ENCODE measurements at regions of chr13 and their contacts with region 1.

Region 1: DNA sequence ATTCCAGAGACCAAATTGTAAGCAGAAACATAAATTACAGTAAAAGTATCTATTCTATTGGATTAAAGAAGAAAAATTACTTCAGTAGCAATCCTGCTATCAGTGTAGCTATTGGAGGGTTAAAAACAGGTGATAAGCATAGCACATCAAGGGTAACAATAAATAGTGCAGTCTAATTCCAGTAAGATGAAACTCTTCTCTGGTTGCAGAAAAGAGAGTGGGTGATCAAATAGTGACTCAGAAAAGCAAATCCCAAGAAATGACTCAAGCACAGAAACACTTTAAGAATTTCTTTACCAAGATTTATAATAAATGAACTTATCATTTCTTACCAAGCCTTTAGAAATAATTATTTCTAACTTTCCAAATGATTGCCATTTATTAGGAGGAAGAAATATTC is 135.7 kb downstream of the LMO7 start:
- DNase-seq: peak; percentile 83
- H3K4me3 ChIP-seq: no peak overlapping the region
- H3K27ac ChIP-seq: peak overlapping the region; percentile 83
- H3K4me1 ChIP-seq: peaks cover 12% of the 10 kb centered on the region
- H3K27me3 ChIP-seq: no peaks in the 10 kb centered on the region
- CTCF ChIP-seq: no peak

Region 2: DNA sequence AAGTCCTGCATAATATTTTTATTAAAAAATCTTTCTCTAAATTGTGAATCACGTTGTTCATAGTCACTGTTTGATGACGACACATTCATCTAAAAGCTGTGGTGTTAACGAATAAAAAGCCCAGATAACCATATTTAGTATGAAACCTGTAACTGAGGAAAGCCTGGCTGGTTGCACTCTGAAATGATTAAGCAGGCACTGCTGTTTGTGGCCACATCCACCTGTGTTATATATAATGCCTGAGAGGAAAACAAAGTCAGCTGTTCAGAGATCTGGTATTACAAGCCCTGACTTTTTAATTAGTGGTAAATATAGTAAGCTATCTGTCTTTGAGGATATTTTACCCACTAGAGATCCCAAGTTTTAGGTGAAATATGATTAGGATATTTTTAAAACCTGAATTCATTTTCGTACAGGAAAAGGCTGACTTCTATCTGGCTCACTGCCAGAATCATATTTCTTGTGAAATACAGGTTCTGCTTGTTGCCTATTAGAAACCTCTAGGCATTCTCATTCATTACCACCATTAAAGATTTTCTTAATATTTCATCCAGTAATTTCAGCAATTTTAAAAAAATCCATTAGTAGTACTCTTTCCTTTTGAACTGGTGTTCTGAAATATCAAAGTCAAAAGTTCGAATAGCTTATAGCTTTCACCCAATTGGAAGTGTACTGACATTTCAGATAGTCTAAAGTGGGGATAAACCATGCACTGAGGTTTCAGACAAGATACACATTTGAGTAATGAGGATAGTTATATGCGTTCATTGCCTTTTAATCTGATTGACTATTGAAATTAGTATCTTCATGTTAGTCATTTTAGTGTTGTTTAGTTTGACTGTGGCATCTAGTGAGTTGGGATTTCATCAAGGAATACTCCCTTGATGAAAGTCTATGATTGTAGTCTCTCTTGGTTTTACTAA is 56.0 kb before region 1 on chr13:
- CTCF ChIA-PET with region 1: no interaction called
- dilution Hi-C with region 1: no loop called
- in situ Hi-C with region 1: no loop called
- intact Hi-C with region 1: loop called (anchors 5 kb)
- DNase-seq: peak; percentile 53
- H3K4me3 ChIP-seq: no peak overlapping the region
- H3K27ac ChIP-seq: peak overlapping the region; percentile 94
- H3K4me1 ChIP-seq: peaks cover 10% of the 10 kb centered on the region
- H3K27me3 ChIP-seq: no peaks in the 10 kb centered on the region
- CTCF ChIP-seq: no peak

Region 3: GRCh38 chr13:75818179-75818967 is 46.6 kb after region 1 on chr13:
- CTCF ChIA-PET with region 1: no interaction called
- dilution Hi-C with region 1: no loop called
- in situ Hi-C with region 1: no loop called
- intact Hi-C with region 1: no loop called
- DNase-seq: no peak
- H3K4me3 ChIP-seq: no peak overlapping the region
- H3K27ac ChIP-seq: no peak overlapping the region
- H3K4me1 ChIP-seq: no peaks in the 10 kb centered on the region
- H3K27me3 ChIP-seq: no peaks in the 10 kb centered on the region
- CTCF ChIP-seq: no peak